Right ventricle myocardium superior (tissue), 1 donor: ENCODE measurements at regions of chr11 and their contacts with region 1.

Region 1: DNA sequence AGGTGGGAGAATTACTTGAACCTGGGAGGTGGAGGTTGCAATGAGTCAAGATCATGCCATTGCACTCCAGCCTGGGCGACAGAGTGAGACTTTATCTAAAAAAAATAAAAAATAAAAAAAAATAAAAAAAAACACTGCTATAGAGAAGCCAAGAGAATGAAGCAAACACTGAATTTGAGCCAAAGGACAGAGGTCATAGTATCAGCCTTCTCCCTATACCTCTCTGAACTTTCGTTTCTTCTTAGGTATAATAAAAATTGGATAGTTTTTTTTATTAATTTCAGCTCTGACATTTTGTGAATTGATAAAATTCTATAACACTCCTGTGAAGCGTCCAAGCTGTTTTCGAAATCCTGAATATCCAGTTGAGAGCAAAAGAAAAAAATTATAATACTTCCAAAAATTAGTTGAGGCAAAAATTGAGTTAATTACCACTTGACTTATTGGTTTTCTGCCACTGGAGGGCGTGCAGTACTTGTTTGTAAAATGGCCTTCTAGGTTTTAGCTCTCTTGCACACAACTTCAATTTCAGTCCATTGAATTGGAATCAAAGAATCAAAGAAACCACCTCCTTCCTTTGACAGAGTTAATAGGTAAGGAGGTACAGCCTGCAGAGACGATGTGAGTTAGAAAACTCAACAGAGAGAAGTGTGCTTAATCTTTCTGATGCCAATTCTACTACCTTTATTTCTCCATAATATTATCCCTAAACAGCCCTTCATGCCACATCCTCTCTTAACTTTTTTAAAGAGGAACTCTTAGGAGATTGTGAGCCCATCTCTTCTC is 143.2 kb downstream of the BBOX1 start:
- DNase-seq: no peak
- ATAC-seq: peak; percentile 83

Region 2: DNA sequence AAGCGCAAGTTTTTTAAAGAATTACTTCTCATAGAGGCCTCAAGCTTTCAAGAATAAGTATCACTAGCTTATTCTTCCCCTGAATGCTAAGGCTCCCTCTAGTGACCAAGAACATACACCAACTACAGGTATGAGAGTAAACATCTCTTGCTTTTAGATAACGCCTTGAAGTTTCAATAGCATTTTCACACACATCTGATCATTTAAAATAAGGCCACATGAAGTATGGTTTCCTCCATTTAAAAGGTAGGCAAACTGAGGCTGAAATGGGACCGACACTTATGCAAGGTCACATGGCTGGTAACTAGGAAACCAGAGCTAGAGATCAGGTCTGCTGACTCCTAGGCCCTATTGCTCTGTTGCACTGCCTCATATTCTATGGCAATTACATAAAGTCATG is 112.6 kb after region 1 on chr11:
- intact Hi-C with region 1: loop called (anchors 2 kb)
- DNase-seq: no peak
- ATAC-seq: peak; percentile 85

Region 3: GRCh38 chr11:27485930-27486773 is 302.3 kb after region 1 on chr11:
- intact Hi-C with region 1: loop called (anchors 2 kb)
- DNase-seq: no peak
- ATAC-seq: peak; percentile 69